AG04450 (cell line): ENCODE measurements at regions of chr6 and their contacts with region 1.

Region 1: GRCh38 chr6:10954590-10955010 is 67.7 kb downstream of the SYCP2L start:
- DNase-seq: peak; percentile 58
- H3K4me3 ChIP-seq: no peak overlapping the region
- H3K27ac ChIP-seq: no peak overlapping the region
- H3K27me3 ChIP-seq: no peaks in the 10 kb centered on the region
- CTCF ChIP-seq: peak; percentile 86

Region 2: DNA sequence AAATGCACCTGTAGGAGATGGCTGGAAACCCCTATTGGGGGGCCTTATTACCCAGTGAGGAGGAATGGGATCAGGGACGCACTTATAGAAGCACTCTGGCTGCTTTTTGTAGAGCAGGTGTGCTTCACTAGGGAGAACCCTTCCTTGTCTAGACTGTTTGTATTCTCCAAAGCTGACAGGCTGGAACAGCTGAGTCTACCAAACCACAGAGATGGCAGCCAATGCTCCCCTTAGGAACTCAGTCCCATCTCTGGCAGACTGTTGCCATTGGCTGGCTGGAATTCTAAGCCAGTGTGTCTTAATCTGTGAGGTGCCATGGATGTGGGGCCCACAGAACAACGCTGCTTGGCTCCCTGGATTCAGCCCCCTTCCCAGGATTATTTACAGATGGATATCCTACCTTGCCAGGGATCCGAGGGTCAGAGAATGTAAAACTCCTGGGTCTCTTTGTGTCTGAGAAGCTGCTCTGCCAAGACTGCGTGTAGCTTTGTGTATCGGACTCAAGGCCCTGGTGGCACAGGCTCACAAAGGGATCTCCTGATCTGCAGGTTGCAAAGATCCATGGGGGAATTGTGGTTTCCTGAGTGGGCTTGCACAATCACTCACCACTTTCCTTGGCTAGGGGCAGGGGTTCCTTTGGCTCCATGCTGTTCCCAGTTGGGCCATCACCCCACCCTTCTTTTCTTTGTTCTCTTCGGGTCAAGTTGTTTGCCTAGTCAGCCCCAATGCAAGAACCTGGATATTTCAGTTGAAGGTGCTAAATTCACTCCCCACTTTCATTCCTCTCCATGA is 286.3 kb before region 1 on chr6:
- CTCF ChIA-PET with region 1: no interaction called
- POLR2A ChIA-PET with region 1: no interaction called
- DNase-seq: no peak
- H3K4me3 ChIP-seq: no peak overlapping the region
- H3K27ac ChIP-seq: no peak overlapping the region
- H3K27me3 ChIP-seq: peaks cover 6% of the 10 kb centered on the region
- CTCF ChIP-seq: no peak

Region 3: GRCh38 chr6:10991115-10991514 is 36.5 kb after region 1 on chr6:
- CTCF ChIA-PET with region 1: no interaction called
- POLR2A ChIA-PET with region 1: no interaction called
- DNase-seq: no peak
- H3K4me3 ChIP-seq: no peak overlapping the region
- H3K27ac ChIP-seq: no peak overlapping the region
- H3K27me3 ChIP-seq: no peaks in the 10 kb centered on the region
- CTCF ChIP-seq: no peak

Region 4: DNA sequence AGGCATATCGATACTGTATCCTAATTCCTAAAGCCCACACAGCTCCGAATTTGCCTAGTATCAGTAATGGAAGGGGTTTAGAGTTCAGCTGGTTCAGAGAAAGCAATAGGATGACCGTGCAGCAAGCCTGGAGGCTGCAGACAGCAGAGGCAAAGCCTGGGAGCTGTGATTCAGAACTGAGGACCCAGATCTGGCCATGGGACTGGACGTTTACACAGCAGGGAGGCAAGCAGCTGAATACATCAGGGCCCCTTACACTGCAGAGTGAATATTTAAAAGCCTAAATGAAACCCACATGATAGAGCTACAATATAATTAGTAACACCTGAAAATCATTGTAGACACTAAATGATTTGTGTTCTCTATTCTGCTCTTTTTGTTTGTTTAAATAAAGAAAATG is 51.5 kb after region 1 on chr6:
- CTCF ChIA-PET with region 1: interaction called, 12 read pairs
- POLR2A ChIA-PET with region 1: no interaction called
- DNase-seq: no peak
- H3K4me3 ChIP-seq: no peak overlapping the region
- H3K27ac ChIP-seq: no peak overlapping the region
- H3K27me3 ChIP-seq: no peaks in the 10 kb centered on the region
- CTCF ChIP-seq: no peak

Region 5: GRCh38 chr6:11044712-11045167 is 90.1 kb after region 1 on chr6:
- CTCF ChIA-PET with region 1: interaction called, 10 read pairs
- POLR2A ChIA-PET with region 1: no interaction called
- DNase-seq: no peak
- H3K4me3 ChIP-seq: peak overlapping the region; percentile 59
- H3K27ac ChIP-seq: no peak overlapping the region
- H3K27me3 ChIP-seq: peaks cover 28% of the 10 kb centered on the region
- CTCF ChIP-seq: no peak

Region 6: GRCh38 chr6:11055127-11055627 is 100.6 kb after region 1 on chr6:
- CTCF ChIA-PET with region 1: interaction called, 24 read pairs
- POLR2A ChIA-PET with region 1: no interaction called
- DNase-seq: no peak
- H3K4me3 ChIP-seq: no peak overlapping the region
- H3K27ac ChIP-seq: no peak overlapping the region
- H3K27me3 ChIP-seq: no peaks in the 10 kb centered on the region
- CTCF ChIP-seq: no peak

Region 7: DNA sequence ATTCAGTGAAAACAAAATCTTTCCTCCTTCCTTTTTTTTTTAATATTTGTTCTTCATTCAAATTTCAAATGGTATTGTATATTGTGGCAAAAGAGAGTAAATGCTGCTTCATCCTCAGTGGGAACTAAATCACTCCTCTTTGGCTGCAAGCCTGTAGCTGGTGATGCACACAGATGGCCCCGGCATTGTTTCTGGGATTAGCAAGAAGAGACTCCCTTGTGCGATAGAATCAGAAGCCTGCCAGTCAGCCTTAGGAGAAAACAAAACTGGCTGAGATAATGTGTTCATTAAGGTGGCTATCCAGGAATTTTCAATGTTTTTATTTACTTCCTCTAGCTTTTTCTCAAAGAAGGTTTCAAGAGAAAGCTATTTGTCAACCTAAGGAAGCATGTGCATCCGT is 110.2 kb after region 1 on chr6:
- CTCF ChIA-PET with region 1: interaction called, 92 read pairs
- POLR2A ChIA-PET with region 1: interaction called, 4 read pairs
- DNase-seq: no peak
- H3K4me3 ChIP-seq: no peak overlapping the region
- H3K27ac ChIP-seq: no peak overlapping the region
- H3K27me3 ChIP-seq: peaks cover 9% of the 10 kb centered on the region
- CTCF ChIP-seq: no peak

Region 8: DNA sequence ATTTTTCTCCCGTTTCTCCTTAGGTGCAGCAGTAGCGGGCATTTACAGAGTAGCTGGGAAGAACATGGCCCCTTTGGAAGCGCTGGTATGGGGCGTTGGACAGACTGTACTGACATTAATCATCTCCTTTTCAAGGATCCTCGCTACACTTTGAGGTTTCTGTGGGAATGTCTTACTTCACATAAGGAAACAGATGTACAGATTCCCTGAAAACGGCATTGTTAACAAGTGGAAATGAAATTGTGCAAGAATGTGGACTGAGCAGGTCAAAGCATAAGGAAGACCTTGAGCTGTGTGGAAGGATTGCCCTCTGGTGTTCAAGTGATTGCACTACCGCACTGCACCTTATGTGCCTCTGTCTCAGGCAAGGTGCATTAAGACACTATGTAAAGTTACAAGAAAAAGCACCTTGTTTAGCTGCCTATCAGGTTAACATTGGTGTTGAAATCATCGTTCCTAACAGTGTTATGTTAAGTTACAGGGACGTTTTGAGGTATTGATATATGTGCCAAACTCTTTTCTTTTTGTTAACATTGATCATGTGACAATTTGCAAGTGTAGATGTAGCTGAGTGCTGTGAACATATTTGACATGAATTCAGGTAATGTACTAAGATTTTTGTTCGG is 620.9 kb after region 1 on chr6:
- CTCF ChIA-PET with region 1: interaction called, 21 read pairs
- POLR2A ChIA-PET with region 1: no interaction called
- DNase-seq: peak; percentile 55
- H3K4me3 ChIP-seq: no peak overlapping the region
- H3K27ac ChIP-seq: no peak overlapping the region
- H3K27me3 ChIP-seq: no peaks in the 10 kb centered on the region
- CTCF ChIP-seq: peak; percentile 98